B cell (primary cell): ENCODE measurements at regions of chr2 and their contacts with region 1.

Region 1: GRCh38 chr2:181326661-181327060 is 130.5 kb upstream of the ITGA4 start:
- DNase-seq: no peak
- ATAC-seq: no peak
- H3K4me3 ChIP-seq: no peak overlapping the region
- H3K4me3 Mint-ChIP-seq: no peak overlapping the region
- H3K27ac ChIP-seq: no peak overlapping the region
- H3K27ac Mint-ChIP-seq: no peak overlapping the region
- H3K4me1 ChIP-seq: peaks cover 0 to 6% of the 10 kb centered on the region in 2 donors
- H3K4me1 Mint-ChIP-seq: peaks cover 11% of the 10 kb centered on the region
- H3K27me3 ChIP-seq: no peaks in the 10 kb centered on the region
- H3K27me3 Mint-ChIP-seq: no peaks in the 10 kb centered on the region
- CTCF ChIP-seq: no peak

Region 2: GRCh38 chr2:181165199-181165868 is 161.3 kb before region 1 on chr2:
- CTCF ChIA-PET with region 1: no interaction called
- POLR2A ChIA-PET with region 1: no interaction called
- intact Hi-C with region 1: no loop called
- DNase-seq: peak; percentile 17
- ATAC-seq: peak; percentile 36
- H3K4me3 ChIP-seq: peak overlapping the region in 1 of 5 experiments; percentile 48
- H3K4me3 Mint-ChIP-seq: peak overlapping the region; percentile 26
- H3K27ac ChIP-seq: peak overlapping the region; percentile 21 to 35
- H3K27ac Mint-ChIP-seq: peak overlapping the region; percentile 18
- H3K4me1 ChIP-seq: peaks cover 18 to 30% of the 10 kb centered on the region in 2 donors
- H3K4me1 Mint-ChIP-seq: peaks cover 30% of the 10 kb centered on the region
- H3K27me3 ChIP-seq: no peaks in the 10 kb centered on the region
- H3K27me3 Mint-ChIP-seq: no peaks in the 10 kb centered on the region
- CTCF ChIP-seq: no peak

Region 3: GRCh38 chr2:181197140-181197760 is 129.4 kb before region 1 on chr2:
- CTCF ChIA-PET with region 1: no interaction called
- POLR2A ChIA-PET with region 1: no interaction called
- intact Hi-C with region 1: no loop called
- DNase-seq: no peak
- ATAC-seq: no peak
- H3K4me3 ChIP-seq: no peak overlapping the region
- H3K4me3 Mint-ChIP-seq: no peak overlapping the region
- H3K27ac ChIP-seq: no peak overlapping the region
- H3K27ac Mint-ChIP-seq: no peak overlapping the region
- H3K4me1 ChIP-seq: peaks cover 0 to 13% of the 10 kb centered on the region in 2 donors
- H3K4me1 Mint-ChIP-seq: peaks cover 15% of the 10 kb centered on the region
- H3K27me3 ChIP-seq: no peaks in the 10 kb centered on the region
- H3K27me3 Mint-ChIP-seq: peaks cover 5% of the 10 kb centered on the region
- CTCF ChIP-seq: no peak

Region 4: GRCh38 chr2:181340891-181341290 is 14.2 kb after region 1 on chr2:
- CTCF ChIA-PET with region 1: no interaction called
- POLR2A ChIA-PET with region 1: no interaction called
- intact Hi-C with region 1: loop called (anchors 2 kb)
- DNase-seq: no peak
- ATAC-seq: no peak
- H3K4me3 ChIP-seq: no peak overlapping the region
- H3K4me3 Mint-ChIP-seq: no peak overlapping the region
- H3K27ac ChIP-seq: no peak overlapping the region
- H3K27ac Mint-ChIP-seq: no peak overlapping the region
- H3K4me1 ChIP-seq: peaks cover 0 to 4% of the 10 kb centered on the region in 2 donors
- H3K4me1 Mint-ChIP-seq: peaks cover 19% of the 10 kb centered on the region
- H3K27me3 ChIP-seq: no peaks in the 10 kb centered on the region
- H3K27me3 Mint-ChIP-seq: no peaks in the 10 kb centered on the region
- CTCF ChIP-seq: no peak